ENCODE measurements at regions of chr12 and their contacts with region 1.

Region 1: GRCh38 chr12:47742253-47742825 is 16.3 kb downstream of the RAPGEF3 start:
- DNase-seq: peak; percentile 64
- H3K4me3 Mint-ChIP-seq: no peak overlapping the region
- H3K27ac Mint-ChIP-seq: no peak overlapping the region
- H3K4me1 Mint-ChIP-seq: peaks cover 9% of the 10 kb centered on the region
- H3K27me3 Mint-ChIP-seq: peaks cover 17% of the 10 kb centered on the region
- CTCF ChIP-seq: peak; percentile 99

Region 2: DNA sequence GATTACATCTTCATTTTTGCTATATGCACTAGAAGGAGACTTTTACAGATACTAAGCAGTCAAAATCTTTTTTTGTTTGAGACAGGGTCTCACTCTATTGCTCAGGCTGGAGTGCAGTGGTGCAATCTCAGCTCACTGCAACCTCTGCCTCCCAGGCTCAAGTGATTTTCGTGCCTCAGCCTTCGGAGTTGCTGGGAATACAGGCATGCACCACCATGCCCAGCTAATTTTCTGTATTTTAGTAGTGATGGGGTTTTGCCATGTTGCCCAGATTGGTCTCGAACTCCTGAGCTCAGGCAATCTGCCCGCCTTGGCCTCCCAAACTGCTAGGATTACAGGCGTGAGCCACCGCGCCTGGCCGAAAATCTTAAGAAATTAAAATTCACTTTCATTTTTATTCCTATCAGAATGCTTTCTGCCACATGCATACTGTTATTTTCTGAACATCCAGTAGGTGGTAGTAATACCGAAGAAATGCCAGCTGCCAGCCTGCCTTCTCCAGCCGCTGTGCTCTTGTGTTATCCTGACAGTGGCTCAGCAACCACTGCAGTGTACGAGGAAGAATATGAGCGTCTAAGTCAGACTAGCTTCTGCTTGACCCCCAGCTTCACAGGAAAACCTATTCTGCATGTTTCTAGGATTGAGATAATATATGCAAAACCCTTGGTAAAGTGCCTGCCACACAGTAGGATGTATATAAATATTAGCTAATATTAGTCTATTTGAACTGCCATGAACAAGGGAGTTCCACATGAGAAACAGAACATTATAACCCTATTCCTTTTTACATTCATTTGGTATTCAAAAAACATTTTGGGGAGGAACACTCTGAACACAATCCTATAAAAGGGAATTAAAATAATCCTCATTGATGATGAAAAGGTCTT is 90.7 kb before region 1 on chr12:
- CTCF ChIA-PET with region 1: interaction called, 12 read pairs
- POLR2A ChIA-PET with region 1: interaction called, 3 read pairs
- intact Hi-C with region 1: no loop called
- DNase-seq: peak; percentile 79
- H3K4me3 Mint-ChIP-seq: peak overlapping the region; percentile 21
- H3K27ac Mint-ChIP-seq: no peak overlapping the region
- H3K4me1 Mint-ChIP-seq: no peaks in the 10 kb centered on the region
- H3K27me3 Mint-ChIP-seq: no peaks in the 10 kb centered on the region
- CTCF ChIP-seq: peak; percentile 64

Region 3: GRCh38 chr12:47758834-47759690 is 16.7 kb after region 1 on chr12 and contains the start of gene RAPGEF3:
- CTCF ChIA-PET with region 1: interaction called, 262 read pairs
- POLR2A ChIA-PET with region 1: interaction called, 6 read pairs
- intact Hi-C with region 1: loop called (anchors 1 kb)
- DNase-seq: peak; percentile 89
- H3K4me3 Mint-ChIP-seq: peak within 1 kb of the TSS; percentile 74
- H3K27ac Mint-ChIP-seq: peak within 1 kb of the TSS; percentile 35
- H3K4me1 Mint-ChIP-seq: peaks cover 20% of the 10 kb centered on the region
- H3K27me3 Mint-ChIP-seq: no peaks in the 10 kb centered on the region
- CTCF ChIP-seq: peak; percentile 60
- total RNA-seq, gene RAPGEF3: 1.4 and 3.4 TPM in 2 replicates

Region 4: GRCh38 chr12:47779301-47779942 is 37.1 kb after region 1 on chr12:
- CTCF ChIA-PET with region 1: interaction called, 843 read pairs
- POLR2A ChIA-PET with region 1: interaction called, 25 read pairs
- intact Hi-C with region 1: loop called (anchors 1 kb)
- DNase-seq: peak; percentile 88
- H3K4me3 Mint-ChIP-seq: no peak overlapping the region
- H3K27ac Mint-ChIP-seq: no peak overlapping the region
- H3K4me1 Mint-ChIP-seq: peaks cover 30% of the 10 kb centered on the region
- H3K27me3 Mint-ChIP-seq: no peaks in the 10 kb centered on the region
- CTCF ChIP-seq: peak; percentile 89

Region 5: GRCh38 chr12:47812797-47813510 is 70.6 kb after region 1 on chr12:
- CTCF ChIA-PET with region 1: interaction called, 72 read pairs
- POLR2A ChIA-PET with region 1: no interaction called
- intact Hi-C with region 1: no loop called
- DNase-seq: peak; percentile 85
- H3K4me3 Mint-ChIP-seq: peak overlapping the region; percentile 68
- H3K27ac Mint-ChIP-seq: peak overlapping the region; percentile 85
- H3K4me1 Mint-ChIP-seq: peaks cover 75% of the 10 kb centered on the region
- H3K27me3 Mint-ChIP-seq: no peaks in the 10 kb centered on the region
- CTCF ChIP-seq: no peak

Region 6: DNA sequence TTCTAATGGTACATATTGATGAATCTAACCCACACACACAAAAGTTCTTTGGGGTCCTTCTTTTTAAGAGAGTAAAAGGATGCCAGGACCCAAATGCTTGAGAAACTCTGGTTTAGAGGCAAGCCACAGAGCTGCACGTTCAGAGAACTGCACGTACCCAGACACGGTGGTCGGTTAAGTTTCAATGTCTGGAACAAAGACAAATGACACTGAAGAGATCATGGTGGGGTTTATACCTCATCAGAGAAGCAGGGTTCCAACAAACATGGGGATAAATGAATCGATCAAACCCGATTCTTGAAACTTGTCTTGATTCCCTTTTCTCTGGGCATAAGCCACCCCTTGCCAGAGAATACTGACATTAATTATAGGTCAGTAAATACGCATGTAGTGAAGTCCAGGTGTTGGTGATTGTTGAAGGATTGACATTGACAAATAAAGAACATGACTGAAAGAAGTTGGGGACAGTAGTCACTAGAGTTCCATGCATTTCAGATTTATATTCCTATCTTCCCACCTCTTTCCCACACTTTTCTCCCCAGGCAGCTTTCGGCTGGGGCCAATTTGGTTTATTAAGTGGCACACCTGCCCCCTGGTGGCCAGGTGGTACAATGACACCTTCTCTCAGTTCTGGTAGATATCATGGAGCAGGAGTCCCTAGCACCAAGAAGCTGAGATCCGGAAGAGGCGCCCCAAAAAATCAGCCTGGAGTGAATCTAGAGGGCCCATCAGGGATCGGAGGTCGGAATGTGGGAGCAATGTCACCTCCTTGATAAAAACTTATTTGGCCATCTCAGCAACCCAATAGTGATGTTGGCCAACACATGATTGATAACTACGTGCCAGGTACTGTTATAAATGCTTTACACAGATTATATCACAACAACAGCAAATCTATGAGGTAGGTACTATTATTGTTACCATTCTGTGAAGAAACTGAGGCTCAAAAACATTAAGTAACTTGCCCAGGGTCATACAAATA is 95.1 kb after region 1 on chr12:
- CTCF ChIA-PET with region 1: interaction called, 376 read pairs
- POLR2A ChIA-PET with region 1: interaction called, 35 read pairs
- intact Hi-C with region 1: loop called (anchors 1 kb)
- DNase-seq: peak; percentile 86
- H3K4me3 Mint-ChIP-seq: no peak overlapping the region
- H3K27ac Mint-ChIP-seq: no peak overlapping the region
- H3K4me1 Mint-ChIP-seq: peaks cover 21% of the 10 kb centered on the region
- H3K27me3 Mint-ChIP-seq: no peaks in the 10 kb centered on the region
- CTCF ChIP-seq: peak; percentile 92

Measured in MCF 10A (cell line).